Activated T-helper 1 cell treated with anti-CD3 and anti-CD28 coated beads, Interleukin-12 subunit alpha, Interleukin-12 subunit beta, Interleukin-2, Interleukin-4 antibody, amounts not matched to agents 30 ng/mL and 10 ng/mL and 1 ng/mL, durations not matched to agents 14 hours and 24 hours and 36 hours (primary cell): ENCODE measurements at regions of chr11 and their contacts with region 1.

Region 1: DNA sequence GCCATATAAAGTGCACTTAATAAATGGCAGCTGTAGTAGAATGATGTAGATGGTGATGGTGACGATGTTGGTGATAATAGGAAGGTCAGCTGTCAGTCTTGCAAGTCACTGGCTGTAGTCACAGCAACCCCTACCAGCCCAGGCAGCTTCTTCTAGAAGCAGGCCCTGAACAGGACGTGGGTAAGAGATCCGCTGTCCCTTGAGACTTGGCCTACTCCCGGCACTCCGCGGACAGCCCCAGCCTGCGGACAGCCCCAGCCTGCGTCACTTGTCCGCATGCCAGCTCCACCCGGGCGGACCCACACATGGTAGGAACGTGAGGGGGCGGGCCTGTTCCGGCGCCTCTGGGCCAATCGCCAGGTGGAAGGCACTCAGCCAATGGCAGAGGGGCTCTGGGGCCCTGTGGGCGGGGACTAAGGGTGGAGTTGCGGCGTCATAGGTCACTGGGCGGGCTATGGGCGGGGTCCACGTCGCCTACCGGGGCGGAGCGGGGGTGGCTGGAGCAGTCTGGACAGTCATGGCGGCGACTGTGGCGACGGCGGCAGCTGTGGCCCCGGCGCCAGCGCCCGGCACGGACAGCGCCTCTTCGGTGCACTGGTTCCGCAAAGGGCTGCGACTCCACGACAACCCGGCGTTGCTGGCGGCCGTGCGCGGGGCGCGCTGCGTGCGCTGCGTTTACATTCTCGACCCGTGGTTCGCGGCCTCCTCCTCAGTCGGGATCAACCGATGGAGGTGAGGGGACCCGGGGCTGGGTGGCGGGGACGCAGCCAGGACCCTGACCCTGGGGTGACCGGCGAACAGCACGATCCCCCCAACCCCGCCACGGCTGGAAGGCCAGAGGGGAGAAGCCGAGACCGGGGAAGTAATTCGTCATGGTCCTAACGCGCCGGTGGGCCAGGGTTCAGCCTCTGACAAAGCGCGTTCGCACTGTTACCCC is at the start of gene CRY2:
- DNase-seq: peak; percentile 97
- H3K4me3 Mint-ChIP-seq: peak within 1 kb of the TSS; percentile 86
- H3K27ac Mint-ChIP-seq: peak within 1 kb of the TSS; percentile 94
- H3K4me1 Mint-ChIP-seq: peaks cover 44% of the 10 kb centered on the region
- H3K27me3 Mint-ChIP-seq: peaks cover 9% of the 10 kb centered on the region
- total RNA-seq, gene CRY2: 19.4 and 23.7 TPM in 2 replicates

Region 2: DNA sequence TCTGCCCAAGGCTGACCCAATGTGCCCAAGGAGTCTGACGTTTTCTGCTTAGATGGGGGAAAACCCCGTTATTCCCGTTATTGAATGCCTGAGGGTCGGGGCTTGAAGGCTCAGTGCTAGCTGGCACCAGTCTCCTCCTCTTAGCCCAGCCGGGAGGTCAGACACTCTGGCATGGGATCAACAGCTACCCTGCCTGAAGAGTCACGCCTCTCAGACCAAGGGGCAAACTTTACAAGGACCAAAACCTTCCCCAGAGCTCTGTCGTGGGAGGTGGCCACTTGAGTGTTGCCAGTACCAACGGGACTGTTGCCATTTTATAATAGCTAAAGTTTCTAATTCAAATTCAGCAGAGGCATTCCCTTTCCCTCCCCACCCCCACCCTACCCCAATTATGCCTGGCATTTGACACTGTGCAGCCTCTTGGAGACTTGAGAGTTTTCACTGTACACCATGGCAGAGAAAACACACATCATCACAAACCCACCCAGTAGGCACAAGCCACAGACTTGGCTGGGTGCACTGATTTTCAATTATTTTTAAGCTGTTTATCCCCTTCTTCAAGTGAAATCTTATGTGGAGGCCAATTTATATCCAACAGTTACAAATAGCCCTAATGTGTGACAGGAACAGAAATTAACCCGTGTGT is 423.6 kb before region 1 on chr11:
- intact Hi-C with region 1: no loop called
- DNase-seq: no peak
- H3K4me3 Mint-ChIP-seq: no peak overlapping the region
- H3K27ac Mint-ChIP-seq: no peak overlapping the region
- H3K4me1 Mint-ChIP-seq: no peaks in the 10 kb centered on the region
- H3K27me3 Mint-ChIP-seq: no peaks in the 10 kb centered on the region

Region 3: DNA sequence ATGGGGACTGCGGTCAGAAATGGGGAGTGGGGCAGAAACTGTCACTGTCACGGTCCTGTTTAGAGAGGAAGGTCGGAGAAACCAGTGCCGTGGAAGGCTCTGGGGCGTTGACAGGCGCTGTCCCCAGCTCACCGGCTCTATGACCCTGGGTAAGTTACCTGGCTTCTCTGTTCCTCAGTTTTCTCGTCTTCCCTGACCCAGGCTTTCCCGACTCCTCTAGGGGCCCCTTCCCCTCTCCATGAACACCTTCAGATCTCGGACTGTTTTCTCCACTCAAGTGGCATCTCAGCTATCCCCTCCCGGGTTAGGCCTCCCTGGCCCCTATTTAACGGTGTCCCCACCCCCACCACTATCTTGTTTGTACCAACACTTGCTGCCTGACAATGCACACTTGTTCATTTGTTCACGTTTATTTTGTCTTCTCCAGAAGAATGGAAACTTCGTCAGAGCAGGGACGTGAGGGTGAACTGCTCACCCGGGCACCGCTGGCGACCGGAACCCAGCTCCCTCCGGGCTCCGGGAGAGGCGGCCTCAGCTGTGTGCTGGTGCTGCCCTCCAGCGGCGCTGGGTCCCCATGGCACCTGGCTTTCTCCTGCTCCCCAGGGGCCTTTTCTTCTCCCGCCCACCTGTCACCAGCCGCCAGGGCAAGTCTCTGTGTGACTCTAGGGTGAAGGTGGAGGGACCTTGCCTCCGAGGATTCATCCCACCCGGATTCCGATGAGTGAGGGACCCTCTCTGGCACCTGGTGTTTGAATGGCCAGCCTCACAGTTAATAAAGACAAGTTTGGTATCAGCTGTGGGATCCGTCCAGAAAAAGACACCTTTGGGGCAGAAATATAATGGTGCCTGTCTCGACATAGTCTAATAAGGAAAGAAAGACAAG is 75.4 kb before region 1 on chr11:
- intact Hi-C with region 1: loop called (anchors 1 kb)
- DNase-seq: peak; percentile 74
- H3K4me3 Mint-ChIP-seq: peak overlapping the region; percentile 84
- H3K27ac Mint-ChIP-seq: no peak overlapping the region
- H3K4me1 Mint-ChIP-seq: peaks cover 12% of the 10 kb centered on the region
- H3K27me3 Mint-ChIP-seq: peaks cover 5% of the 10 kb centered on the region

Region 4: DNA sequence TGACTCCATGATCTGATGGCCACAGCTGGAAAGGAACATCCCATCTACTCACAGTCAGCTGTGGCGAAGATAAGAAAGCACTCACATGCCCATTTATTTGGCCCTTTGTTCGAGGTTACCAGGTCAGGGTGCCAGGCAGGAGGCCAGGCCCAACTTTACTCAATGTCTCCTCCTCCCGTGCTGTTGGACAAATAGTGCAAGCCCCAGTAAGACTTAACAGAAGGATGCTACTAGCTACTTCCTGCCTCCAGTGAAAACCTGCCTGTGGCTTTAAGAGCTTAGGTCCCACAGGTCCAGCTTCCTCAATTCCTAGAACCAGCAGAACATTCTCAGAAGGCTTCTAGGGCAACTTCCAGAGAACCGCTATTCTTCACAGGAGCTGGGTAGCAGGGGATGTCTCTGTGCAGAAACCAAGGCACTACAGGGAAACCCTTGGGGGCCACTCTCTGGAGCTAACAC is 12.9 kb before region 1 on chr11:
- intact Hi-C with region 1: loop called (anchors 1 kb)
- DNase-seq: peak; percentile 36
- H3K4me3 Mint-ChIP-seq: peak overlapping the region; percentile 72
- H3K27ac Mint-ChIP-seq: peak overlapping the region; percentile 88
- H3K4me1 Mint-ChIP-seq: peaks cover 18% of the 10 kb centered on the region
- H3K27me3 Mint-ChIP-seq: peaks cover 18% of the 10 kb centered on the region

Region 5: DNA sequence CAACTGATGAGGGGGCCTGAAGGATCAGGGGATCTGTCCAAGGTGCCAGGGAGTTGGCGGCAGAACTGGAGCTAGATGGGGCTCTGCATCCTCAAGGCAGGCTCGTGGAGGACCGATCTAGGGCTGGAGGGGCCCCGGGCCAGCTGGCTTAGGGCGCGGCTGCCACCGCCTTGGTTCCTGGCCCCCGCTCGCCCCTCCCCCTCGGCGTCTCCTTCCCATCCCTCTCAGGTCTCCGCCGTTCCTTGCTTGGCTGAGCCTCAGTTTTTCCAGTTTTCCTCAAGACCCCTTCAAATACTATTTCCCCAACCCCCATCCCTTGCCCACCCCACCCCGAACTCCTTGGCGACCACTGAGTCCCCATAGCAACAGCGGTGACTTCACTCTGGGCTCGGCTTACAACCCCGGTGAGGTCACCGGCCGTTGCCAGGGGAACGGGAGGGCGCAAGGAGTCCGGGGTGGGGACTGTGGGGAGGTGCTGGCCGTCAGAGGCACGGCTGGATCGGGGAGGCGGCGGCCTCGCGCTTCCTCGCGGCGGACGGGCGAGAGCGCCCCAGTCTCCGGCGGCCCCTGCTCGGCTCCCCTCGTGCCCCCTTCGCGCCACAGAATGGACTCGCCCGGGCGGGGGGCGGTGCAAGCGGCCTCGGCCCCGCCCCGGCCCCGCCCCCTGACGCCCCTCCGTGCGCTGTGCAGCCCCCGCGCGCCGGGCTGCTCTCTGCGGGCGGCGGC is 52.4 kb after region 1 on chr11:
- intact Hi-C with region 1: loop called (anchors 1 kb)
- DNase-seq: peak; percentile 66
- H3K4me3 Mint-ChIP-seq: peak overlapping the region; percentile 42
- H3K27ac Mint-ChIP-seq: no peak overlapping the region
- H3K4me1 Mint-ChIP-seq: no peaks in the 10 kb centered on the region
- H3K27me3 Mint-ChIP-seq: peaks cover 30% of the 10 kb centered on the region

Region 6: DNA sequence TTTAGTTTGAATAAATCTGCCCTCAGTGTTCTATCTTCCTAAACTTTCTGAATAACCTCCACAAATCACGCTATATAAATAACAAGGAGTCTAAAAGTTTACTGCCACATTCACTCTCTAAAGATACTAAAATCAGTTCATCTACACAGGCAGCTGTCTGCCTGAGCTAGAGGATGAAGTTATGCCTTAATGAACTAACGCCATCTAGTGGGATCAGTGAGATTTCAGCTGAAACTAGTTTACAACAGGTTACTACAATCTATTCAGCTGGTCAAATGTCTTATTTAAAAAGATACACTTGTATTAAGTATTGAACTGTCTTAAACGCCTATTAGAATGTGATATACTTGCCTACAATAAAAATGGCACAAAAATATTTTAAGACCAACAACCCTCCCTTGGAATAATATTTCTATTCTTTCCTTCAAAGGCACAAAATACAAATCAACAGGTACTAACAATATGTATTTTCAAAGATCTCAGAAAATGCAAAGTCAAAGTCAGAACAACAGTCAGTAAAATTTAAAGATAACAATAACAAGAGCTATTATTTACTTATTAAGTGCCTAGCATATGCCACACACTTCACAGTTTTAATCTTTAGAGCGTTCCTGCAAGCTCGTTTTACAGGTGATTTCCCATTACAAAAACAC is 159.3 kb after region 1 on chr11:
- intact Hi-C with region 1: loop called (anchors 1 kb)
- DNase-seq: no peak
- H3K4me3 Mint-ChIP-seq: no peak overlapping the region
- H3K27ac Mint-ChIP-seq: no peak overlapping the region
- H3K4me1 Mint-ChIP-seq: no peaks in the 10 kb centered on the region
- H3K27me3 Mint-ChIP-seq: no peaks in the 10 kb centered on the region

Region 7: DNA sequence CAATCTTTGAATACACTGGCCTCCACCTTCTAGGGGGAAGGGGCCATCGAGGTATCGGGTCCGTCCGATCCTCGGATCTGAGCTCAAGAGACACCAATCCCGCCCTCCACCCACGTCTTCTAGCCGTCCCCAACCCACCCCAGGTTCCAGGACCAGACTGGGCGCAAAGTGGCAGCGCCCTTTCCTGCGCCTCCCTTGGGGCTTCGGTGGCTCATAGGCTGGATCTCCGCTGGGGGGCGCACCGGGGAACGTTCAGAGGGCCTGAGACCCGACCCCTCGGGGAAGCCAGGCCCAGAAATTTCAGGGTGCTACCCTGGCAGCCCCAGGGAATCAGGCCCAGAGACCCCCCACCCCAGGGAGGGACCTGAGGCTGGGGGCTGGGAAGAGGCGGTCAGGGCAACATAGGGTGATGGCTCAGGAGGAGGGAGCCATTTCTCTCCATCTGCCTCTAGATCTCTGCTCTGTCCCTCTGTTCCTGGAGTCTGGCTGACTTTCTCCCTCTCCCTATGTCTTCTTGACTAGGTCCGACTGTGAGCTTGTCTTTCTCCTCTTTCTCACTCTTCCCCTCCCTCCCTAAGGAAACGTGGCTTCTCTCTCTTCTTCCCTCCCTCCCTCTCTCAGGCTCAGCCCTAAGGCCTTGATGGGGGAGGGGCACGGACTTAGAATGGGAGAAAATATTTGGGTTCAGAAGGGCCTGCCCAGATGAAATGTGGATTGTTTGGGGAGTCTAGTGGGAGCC is 431.3 kb after region 1 on chr11:
- intact Hi-C with region 1: no loop called
- DNase-seq: no peak
- H3K4me3 Mint-ChIP-seq: no peak overlapping the region
- H3K27ac Mint-ChIP-seq: no peak overlapping the region
- H3K4me1 Mint-ChIP-seq: no peaks in the 10 kb centered on the region
- H3K27me3 Mint-ChIP-seq: peaks cover 46% of the 10 kb centered on the region

Region 8: DNA sequence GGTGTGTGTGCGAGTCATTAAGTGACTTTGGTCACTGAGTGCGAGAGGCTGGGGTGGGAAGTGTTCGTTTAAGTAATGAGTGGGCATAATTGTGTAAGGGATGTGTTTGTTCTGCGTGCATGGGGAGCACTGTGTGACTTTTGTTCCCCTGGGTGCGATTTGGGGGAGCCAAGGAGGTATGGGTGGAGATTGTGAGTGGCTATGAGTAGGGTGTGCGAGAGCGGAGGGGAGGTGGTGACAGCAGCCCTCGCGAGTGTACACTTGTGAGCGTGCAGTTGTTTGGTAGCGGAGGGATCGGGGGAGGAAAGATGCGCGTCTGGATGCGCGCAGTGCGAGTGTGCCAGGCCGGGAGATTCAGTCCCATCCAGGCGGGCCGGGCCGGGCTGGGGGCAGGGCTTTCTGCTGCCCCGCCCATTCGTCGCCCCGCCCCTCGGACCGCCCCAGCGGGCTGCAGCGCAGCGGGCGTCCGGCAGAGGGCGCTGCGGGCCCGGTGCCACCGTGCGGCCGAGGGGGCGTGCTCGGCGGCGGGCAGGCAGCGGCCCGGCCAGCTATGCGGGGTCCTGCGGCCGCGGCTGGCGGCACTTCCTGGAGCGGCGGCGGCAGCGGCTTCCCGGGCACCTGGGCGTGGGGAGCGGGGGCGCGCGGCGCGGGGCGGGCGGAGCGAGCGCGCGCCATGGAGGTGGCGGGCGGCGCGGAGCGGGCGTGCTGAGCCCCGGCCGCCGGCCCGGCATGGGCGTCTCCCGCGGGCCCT is 499.8 kb after region 1 on chr11 and contains the start of gene DGKZ:
- intact Hi-C with region 1: loop called (anchors 5 kb)
- DNase-seq: peak; percentile 91
- H3K4me3 Mint-ChIP-seq: peak within 1 kb of the TSS; percentile 88
- H3K27ac Mint-ChIP-seq: peak within 1 kb of the TSS; percentile 89
- H3K4me1 Mint-ChIP-seq: peaks cover 72% of the 10 kb centered on the region
- H3K27me3 Mint-ChIP-seq: peaks cover 3% of the 10 kb centered on the region
- total RNA-seq, gene DGKZ: 101 TPM in 2 replicates